ENCODE measurements at regions of chr12 and their contacts with region 1.

Region 1: DNA sequence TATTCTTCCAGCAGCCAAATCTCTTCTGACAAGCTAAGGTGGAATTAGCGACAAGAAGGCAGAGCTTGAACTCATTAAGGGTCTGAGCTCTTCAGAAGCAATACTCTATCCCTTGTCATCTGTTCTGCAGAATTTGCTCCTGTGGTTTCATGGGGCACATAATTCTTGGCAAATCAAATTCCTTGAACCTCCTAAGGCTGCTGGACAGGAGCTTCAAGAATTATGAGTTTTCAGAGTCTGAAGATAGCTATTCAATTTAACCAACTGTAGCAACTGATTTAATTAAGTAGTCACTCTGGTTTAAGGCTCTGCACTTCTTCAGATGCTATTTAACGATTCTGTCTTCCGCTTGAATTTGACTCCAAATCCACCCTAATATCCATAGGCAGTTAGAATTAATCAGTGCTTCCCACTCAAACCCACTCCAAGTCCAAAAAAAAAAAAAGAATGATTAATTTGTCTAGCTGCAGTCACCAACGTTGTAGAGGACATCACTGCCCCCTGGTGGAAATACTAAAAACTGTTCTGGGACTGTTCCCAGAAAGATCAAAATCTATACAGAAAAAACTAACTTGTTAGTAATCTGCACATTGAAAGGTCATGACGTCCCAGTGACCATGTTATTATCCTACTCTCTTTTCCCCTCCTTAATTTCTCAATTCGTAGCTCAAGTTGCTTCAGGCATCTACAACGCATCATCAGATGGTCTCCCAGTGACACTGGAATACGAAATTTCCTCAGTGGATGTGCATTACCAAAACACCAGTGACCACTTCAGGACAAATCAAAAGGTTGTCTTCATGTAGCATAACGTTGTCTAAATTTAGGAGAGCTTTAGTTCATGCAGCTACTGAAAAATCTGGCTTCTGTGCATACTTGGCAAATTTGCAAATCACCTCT is 169.8 kb downstream of the KIF21A start:
- DNase-seq: peak; percentile 27
- ATAC-seq: 0 out of 2 replicates have a peak, but pooled peaks have one; percentile 30
- H3K4me3 Mint-ChIP-seq: no peak overlapping the region
- H3K27ac Mint-ChIP-seq: no peak overlapping the region
- H3K4me1 Mint-ChIP-seq: no peaks in the 10 kb centered on the region
- H3K27me3 Mint-ChIP-seq: no peaks in the 10 kb centered on the region
- CTCF ChIP-seq: peak; percentile 77; the same call in 1 of the 2 replicates

Region 2: GRCh38 chr12:38906482-38907170 is 366.5 kb before region 1 on chr12:
- CTCF ChIA-PET with region 1: interaction called, 11 read pairs
- POLR2A ChIA-PET with region 1: no interaction called
- DNase-seq: peak; percentile 92
- ATAC-seq: peak; percentile 76
- H3K4me3 Mint-ChIP-seq: peak overlapping the region; percentile 93
- H3K27ac Mint-ChIP-seq: peak overlapping the region; percentile 68; the same call in 1 of the 2 replicates
- H3K4me1 Mint-ChIP-seq: peaks cover 19% of the 10 kb centered on the region
- H3K27me3 Mint-ChIP-seq: peaks cover 4% of the 10 kb centered on the region
- CTCF ChIP-seq: peak; percentile 39; the same call in 1 of the 2 replicates

Region 3: DNA sequence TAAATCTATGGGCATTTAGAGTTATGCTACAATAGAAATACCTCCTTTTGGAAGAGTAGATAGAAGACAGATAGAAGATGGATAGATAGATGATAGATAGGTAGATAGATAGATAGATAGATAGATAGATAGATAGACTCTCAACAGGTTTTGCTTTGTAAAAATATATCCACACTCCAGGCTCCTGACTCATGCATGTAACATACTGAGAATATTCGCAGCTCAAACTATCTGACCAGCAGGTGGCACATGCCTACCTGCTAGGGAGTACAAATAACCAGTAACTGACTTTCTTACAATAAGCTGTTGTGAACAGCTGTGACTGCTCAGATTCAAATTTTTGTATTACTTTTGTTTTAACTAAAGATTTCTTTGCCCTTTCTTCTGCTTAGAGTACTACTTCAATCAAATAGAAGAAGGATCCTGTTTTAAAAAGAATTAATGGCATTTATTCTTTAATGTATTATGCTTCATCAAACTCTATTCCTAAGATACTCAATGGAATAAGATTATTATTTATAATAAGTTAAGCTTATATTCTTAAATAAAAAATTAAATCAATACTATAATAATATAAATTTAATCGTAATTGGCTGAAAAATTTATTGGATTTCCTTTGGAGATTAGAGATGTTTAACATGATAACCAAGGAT is 352.0 kb before region 1 on chr12:
- CTCF ChIA-PET with region 1: interaction called, 33 read pairs
- POLR2A ChIA-PET with region 1: no interaction called
- DNase-seq: peak; percentile 53
- ATAC-seq: peak; percentile 64
- H3K4me3 Mint-ChIP-seq: no peak overlapping the region
- H3K27ac Mint-ChIP-seq: no peak overlapping the region
- H3K4me1 Mint-ChIP-seq: no peaks in the 10 kb centered on the region
- H3K27me3 Mint-ChIP-seq: no peaks in the 10 kb centered on the region
- CTCF ChIP-seq: peak; percentile 41

Region 4: DNA sequence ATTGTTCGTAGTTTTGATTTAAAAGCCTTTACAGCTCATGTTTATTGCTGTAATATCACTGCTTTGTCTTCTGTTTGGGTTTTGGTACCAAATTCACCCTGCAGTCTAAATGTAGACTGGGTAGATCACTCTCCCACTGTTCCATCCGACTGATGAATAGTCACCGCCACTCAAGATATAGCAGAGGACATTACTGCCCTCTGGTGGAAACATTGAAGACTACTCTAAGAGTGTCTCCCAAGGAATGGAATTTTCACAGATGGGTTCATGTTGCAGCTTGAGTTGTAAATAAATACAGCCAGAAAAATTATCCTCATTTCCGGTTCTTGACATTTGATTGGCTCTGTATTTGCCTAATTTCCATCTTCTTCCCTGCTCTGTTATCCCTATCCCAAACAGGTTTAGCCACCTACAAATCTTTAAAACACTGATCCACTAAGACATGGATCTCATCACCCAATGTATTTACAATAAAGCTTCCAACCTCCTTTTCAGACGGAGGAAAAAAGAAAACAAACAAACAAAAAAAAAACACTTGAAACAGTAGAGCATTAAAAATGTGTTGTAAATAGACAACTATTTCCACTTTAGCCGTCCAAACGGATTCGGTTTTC is 169.5 kb before region 1 on chr12:
- CTCF ChIA-PET with region 1: interaction called, 17 read pairs
- POLR2A ChIA-PET with region 1: no interaction called
- DNase-seq: no peak
- ATAC-seq: peak; percentile 96
- H3K4me3 Mint-ChIP-seq: no peak overlapping the region
- H3K27ac Mint-ChIP-seq: no peak overlapping the region
- H3K4me1 Mint-ChIP-seq: peaks cover 23% of the 10 kb centered on the region
- H3K27me3 Mint-ChIP-seq: no peaks in the 10 kb centered on the region
- CTCF ChIP-seq: peak; percentile 69

Region 5: DNA sequence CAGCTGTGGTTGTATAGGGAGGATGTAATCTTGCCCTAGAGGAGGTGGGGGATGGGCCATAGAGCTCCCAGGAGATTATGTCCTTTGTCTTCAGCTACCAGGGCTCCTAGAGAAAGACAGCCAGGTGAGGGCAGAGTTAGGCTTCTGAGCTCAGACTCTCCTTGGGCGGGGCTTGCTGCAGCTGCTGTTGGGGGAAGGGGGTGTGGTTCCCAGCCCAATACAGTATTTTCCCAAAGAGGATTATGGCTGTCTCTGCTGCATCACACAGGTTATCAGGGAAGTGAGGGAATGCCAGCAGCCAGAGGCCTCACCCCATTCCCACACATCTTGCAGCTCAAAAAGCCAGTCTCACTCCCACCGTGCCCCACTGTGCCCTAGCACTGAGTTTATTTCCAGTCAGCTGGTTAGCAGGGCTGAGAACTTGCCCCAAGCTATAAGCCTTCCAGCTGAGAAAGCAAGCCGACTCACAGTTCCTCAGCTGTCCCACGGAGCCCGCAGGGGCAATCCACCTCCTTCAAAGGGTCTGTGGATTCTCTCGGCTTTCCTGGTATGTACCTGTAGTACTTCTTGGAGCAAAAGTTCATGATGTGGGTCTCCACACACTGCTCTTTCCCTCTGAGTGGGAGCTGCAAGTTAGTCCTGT is 150.4 kb before region 1 on chr12:
- CTCF ChIA-PET with region 1: interaction called, 37 read pairs
- POLR2A ChIA-PET with region 1: interaction called, 3 read pairs
- DNase-seq: peak; percentile 69
- ATAC-seq: peak; percentile 98
- H3K4me3 Mint-ChIP-seq: no peak overlapping the region
- H3K27ac Mint-ChIP-seq: peak overlapping the region; percentile 69; the same call in 1 of the 2 replicates
- H3K4me1 Mint-ChIP-seq: peaks cover 38% of the 10 kb centered on the region
- H3K27me3 Mint-ChIP-seq: no peaks in the 10 kb centered on the region
- CTCF ChIP-seq: no peak

Region 6: GRCh38 chr12:39145175-39145999 is 127.7 kb before region 1 on chr12:
- CTCF ChIA-PET with region 1: interaction called, 22 read pairs
- POLR2A ChIA-PET with region 1: interaction called, 3 read pairs
- DNase-seq: peak; percentile 92
- ATAC-seq: peak; percentile 97
- H3K4me3 Mint-ChIP-seq: peak overlapping the region; percentile 69
- H3K27ac Mint-ChIP-seq: no peak overlapping the region
- H3K4me1 Mint-ChIP-seq: 0 out of 2 replicates have a peak, but pooled peaks cover 4% of the 10 kb centered on the region
- H3K27me3 Mint-ChIP-seq: peaks cover 38% of the 10 kb centered on the region
- CTCF ChIP-seq: peak; percentile 86

Measured in WTC11 (cell line).